ENCODE measurements at regions of chr3 and their contacts with region 1.

Region 1: DNA sequence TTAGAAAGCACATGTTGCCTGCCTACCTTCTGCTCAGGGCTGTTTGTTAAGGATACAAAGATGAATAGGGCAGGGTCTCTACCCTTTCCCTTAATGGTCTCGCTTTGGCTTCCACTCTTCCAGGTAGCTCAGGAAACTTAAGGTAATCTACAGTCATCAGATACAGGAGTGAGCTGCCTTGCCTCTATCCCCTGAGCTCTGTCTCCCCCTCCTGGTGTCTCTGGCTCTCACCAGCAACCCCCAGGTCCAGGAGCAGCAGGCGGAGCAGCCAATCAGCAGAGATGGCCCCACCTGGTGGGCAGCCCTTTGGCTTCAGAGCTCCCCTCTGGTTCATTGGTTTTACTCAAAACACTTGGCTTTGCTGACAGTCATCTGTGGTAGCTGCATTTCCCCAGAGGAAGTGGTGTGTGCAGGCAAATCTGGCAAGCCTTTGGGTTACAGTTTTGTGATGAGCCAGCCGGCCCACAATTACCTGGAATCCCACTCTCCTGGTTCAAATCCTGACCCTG is 8.5 kb upstream of the CX3CR1 start:
- DNase-seq: peak; percentile 76 to 77
- H3K4me3 ChIP-seq: no peak overlapping the region
- H3K27ac ChIP-seq: no peak overlapping the region
- H3K4me1 ChIP-seq: no peaks in the 10 kb centered on the region
- H3K27me3 ChIP-seq: no peaks in the 10 kb centered on the region
- CTCF ChIP-seq: peak; percentile 89 to 95 (median 90)
- POLR2A ChIP-seq: no peak

Region 2: GRCh38 chr3:39107388-39108199 is 180.8 kb before region 1 on chr3 and contains the starts of genes GORASP1 and TTC21A:
- intact Hi-C with region 1: no loop called
- DNase-seq: peak; percentile 90 to 91
- H3K4me3 ChIP-seq: peak within 1 kb of the TSS; percentile 63 to 79
- H3K27ac ChIP-seq: peak within 1 kb of the TSS; percentile 82 to 92
- H3K4me1 ChIP-seq: peaks cover 0 to 5% of the 10 kb centered on the region in 2 donors
- H3K27me3 ChIP-seq: no peaks in the 10 kb centered on the region
- CTCF ChIP-seq: no peak
- POLR2A ChIP-seq: peak; percentile 67 to 90
- total RNA-seq, gene GORASP1: 32.3 to 73.4 (median 47.5) TPM
- total RNA-seq, gene TTC21A: 2.8 to 16.3 (median 6.1) TPM

Region 3: DNA sequence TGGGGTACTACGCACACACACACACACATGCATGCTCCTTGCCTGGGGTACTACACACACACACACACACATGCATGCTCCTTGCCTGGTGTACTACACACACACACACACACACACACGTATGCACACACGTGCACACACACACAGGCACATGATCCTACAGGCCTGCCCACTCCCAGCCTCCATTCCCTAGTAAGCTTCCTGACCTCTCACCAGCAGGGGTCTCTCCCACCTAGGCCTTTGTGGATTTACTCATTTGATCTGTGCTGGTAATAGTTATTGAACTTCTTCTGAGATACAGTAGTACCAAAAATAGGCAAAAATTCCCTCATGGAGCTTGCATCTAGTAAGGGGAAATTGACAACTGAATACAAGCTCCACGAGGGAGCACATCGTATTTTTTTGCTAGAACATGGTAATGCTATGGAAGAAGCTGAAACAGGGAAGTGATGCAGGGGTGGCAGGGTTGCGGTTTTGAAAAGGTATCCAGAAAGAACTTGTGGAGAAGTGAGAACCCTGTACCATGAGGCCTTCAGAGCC is 161.8 kb before region 1 on chr3:
- intact Hi-C with region 1: loop called (anchors 5 kb)
- DNase-seq: peak; percentile 51 to 61
- H3K4me3 ChIP-seq: no peak overlapping the region
- H3K27ac ChIP-seq: no peak overlapping the region
- H3K4me1 ChIP-seq: no peaks in the 10 kb centered on the region
- H3K27me3 ChIP-seq: no peaks in the 10 kb centered on the region
- CTCF ChIP-seq: peak; percentile 56 to 73 (median 64)
- POLR2A ChIP-seq: no peak

Region 4: DNA sequence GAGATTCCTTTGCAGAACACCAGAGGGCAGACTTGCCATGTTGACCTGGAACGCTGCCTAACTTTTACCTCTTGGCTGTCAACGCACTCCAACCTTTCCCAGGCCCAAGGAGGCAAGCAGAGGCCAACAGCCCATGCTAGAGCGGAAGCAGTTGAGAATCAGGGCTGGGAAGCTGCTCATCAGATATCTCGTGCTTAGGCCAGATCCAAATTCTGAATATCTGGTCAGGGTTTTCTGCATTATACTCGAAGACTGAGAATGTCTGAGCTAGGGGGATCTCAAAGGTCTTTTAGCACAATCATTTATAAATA is 98.4 kb before region 1 on chr3:
- intact Hi-C with region 1: loop called (anchors 5 kb)
- DNase-seq: peak; percentile 56 to 66
- H3K4me3 ChIP-seq: no peak overlapping the region
- H3K27ac ChIP-seq: peak overlapping the region in 1 of 2 donors; percentile 15
- H3K4me1 ChIP-seq: no peaks in the 10 kb centered on the region
- H3K27me3 ChIP-seq: no peaks in the 10 kb centered on the region
- CTCF ChIP-seq: peak in 3 of 4 experiments; percentile 68 to 75 (median 71)
- POLR2A ChIP-seq: no peak

Region 5: GRCh38 chr3:39473452-39474127 is 185.2 kb after region 1 on chr3:
- intact Hi-C with region 1: no loop called
- DNase-seq: no peak
- H3K4me3 ChIP-seq: no peak overlapping the region
- H3K27ac ChIP-seq: no peak overlapping the region
- H3K4me1 ChIP-seq: no peaks in the 10 kb centered on the region
- H3K27me3 ChIP-seq: no peaks in the 10 kb centered on the region
- CTCF ChIP-seq: no peak
- POLR2A ChIP-seq: no peak

Region 6: GRCh38 chr3:39569095-39569494 is 280.7 kb after region 1 on chr3:
- intact Hi-C with region 1: no loop called
- DNase-seq: no peak
- H3K4me3 ChIP-seq: no peak overlapping the region
- H3K27ac ChIP-seq: no peak overlapping the region
- H3K4me1 ChIP-seq: no peaks in the 10 kb centered on the region
- H3K27me3 ChIP-seq: no peaks in the 10 kb centered on the region
- CTCF ChIP-seq: no peak
- POLR2A ChIP-seq: no peak